CD4-positive, alpha-beta T cell (primary cell): ENCODE measurements at regions of chrX and their contacts with region 1.

Region 1: GRCh38 chrX:133513123-133513522 is 97.8 kb upstream of the GPC4 start:
- DNase-seq: no peak
- ATAC-seq: no peak
- H3K4me3 ChIP-seq: no peak overlapping the region
- H3K4me3 Mint-ChIP-seq: no peak overlapping the region
- H3K27ac ChIP-seq: no peak overlapping the region
- H3K27ac Mint-ChIP-seq: no peak overlapping the region
- H3K4me1 ChIP-seq: no peaks in the 10 kb centered on the region
- H3K4me1 Mint-ChIP-seq: no peaks in the 10 kb centered on the region
- H3K27me3 ChIP-seq: no peaks in the 10 kb centered on the region
- H3K27me3 Mint-ChIP-seq: no peaks in the 10 kb centered on the region
- CTCF ChIP-seq: no peak

Region 2: DNA sequence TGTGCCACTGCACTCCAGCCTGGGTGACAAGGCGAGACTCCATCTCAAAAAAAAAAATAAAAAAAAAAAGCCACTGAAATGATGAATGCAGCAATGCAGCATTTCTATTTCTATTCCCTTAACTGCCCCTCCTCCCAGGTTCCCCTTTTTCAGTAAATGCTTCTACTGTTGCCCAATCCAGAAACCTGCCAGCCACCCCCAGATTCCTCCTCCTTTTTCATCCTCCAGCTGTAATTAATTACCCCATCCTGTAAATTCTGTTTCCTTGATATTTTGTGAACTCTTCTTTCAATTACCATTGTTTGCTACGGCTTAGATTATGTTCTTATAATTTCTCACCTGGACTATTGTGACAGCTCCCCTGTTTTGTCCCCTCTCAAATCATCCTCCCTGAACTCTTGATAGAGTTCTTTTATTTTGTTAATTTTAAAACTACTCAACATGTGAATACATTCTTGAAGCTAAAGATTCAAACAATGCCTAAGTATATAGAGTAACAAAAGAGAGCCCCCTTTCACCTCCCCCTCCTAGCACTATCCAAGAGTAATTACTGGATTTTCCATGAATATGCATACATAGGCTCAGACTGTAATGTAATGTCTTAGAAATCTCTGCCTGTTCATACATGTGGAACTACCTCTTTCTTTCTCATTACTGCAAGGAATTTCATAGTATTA is 42.8 kb after region 1 on chrX:
- CTCF ChIA-PET with region 1: no interaction called
- POLR2A ChIA-PET with region 1: no interaction called
- intact Hi-C with region 1: no loop called
- DNase-seq: peak in 2 of 14 experiments; percentile 5 to 21
- ATAC-seq: no peak
- H3K4me3 ChIP-seq: no peak overlapping the region
- H3K4me3 Mint-ChIP-seq: no peak overlapping the region
- H3K27ac ChIP-seq: no peak overlapping the region
- H3K27ac Mint-ChIP-seq: no peak overlapping the region
- H3K4me1 ChIP-seq: no peaks in the 10 kb centered on the region
- H3K4me1 Mint-ChIP-seq: no peaks in the 10 kb centered on the region
- H3K27me3 ChIP-seq: no peaks in the 10 kb centered on the region
- H3K27me3 Mint-ChIP-seq: no peaks in the 10 kb centered on the region
- CTCF ChIP-seq: no peak

Region 3: DNA sequence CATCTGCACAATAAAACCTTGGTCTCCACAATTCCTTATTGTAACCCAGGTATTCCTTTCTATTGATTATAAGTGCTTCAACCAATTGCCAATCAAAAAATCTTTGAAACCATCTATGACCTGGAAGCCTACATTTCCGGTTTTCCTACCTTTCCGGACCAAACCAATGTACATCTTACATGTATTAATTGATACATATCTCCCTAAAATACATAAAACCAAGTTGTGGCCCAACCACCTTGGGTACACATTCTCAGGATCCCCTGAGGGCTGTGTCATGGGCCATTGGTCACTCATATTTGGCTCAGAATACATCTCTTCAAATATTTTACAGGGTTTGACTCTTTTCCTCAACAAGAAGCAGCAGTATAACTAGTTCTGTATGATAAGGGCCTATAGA is 107.6 kb after region 1 on chrX:
- CTCF ChIA-PET with region 1: no interaction called
- POLR2A ChIA-PET with region 1: no interaction called
- intact Hi-C with region 1: loop called in 1 of 2 experiments (anchors 5 kb)
- DNase-seq: no peak
- ATAC-seq: no peak
- H3K4me3 ChIP-seq: no peak overlapping the region
- H3K4me3 Mint-ChIP-seq: no peak overlapping the region
- H3K27ac ChIP-seq: no peak overlapping the region
- H3K27ac Mint-ChIP-seq: no peak overlapping the region
- H3K4me1 ChIP-seq: no peaks in the 10 kb centered on the region
- H3K4me1 Mint-ChIP-seq: no peaks in the 10 kb centered on the region
- H3K27me3 ChIP-seq: no peaks in the 10 kb centered on the region
- H3K27me3 Mint-ChIP-seq: no peaks in the 10 kb centered on the region
- CTCF ChIP-seq: no peak

Region 4: GRCh38 chrX:134625315-134625718 is 1112.2 kb after region 1 on chrX:
- CTCF ChIA-PET with region 1: no interaction called
- POLR2A ChIA-PET with region 1: no interaction called
- intact Hi-C with region 1: loop called in 1 of 2 experiments (anchors 5 kb)
- DNase-seq: no peak
- ATAC-seq: no peak
- H3K4me3 ChIP-seq: no peak overlapping the region
- H3K4me3 Mint-ChIP-seq: no peak overlapping the region
- H3K27ac ChIP-seq: no peak overlapping the region
- H3K27ac Mint-ChIP-seq: no peak overlapping the region
- H3K4me1 ChIP-seq: no peaks in the 10 kb centered on the region
- H3K4me1 Mint-ChIP-seq: no peaks in the 10 kb centered on the region
- H3K27me3 ChIP-seq: no peaks in the 10 kb centered on the region
- H3K27me3 Mint-ChIP-seq: peaks cover 6% of the 10 kb centered on the region
- CTCF ChIP-seq: no peak